ENCODE measurements at regions of chr1 and their contacts with region 1.

Region 1: GRCh38 chr1:28259307-28260167 is at the start of gene SESN2:
- DNase-seq: peak; percentile 92
- H3K4me3 ChIP-seq: peak within 1 kb of the TSS; percentile 97
- CTCF ChIP-seq: no peak

Region 2: DNA sequence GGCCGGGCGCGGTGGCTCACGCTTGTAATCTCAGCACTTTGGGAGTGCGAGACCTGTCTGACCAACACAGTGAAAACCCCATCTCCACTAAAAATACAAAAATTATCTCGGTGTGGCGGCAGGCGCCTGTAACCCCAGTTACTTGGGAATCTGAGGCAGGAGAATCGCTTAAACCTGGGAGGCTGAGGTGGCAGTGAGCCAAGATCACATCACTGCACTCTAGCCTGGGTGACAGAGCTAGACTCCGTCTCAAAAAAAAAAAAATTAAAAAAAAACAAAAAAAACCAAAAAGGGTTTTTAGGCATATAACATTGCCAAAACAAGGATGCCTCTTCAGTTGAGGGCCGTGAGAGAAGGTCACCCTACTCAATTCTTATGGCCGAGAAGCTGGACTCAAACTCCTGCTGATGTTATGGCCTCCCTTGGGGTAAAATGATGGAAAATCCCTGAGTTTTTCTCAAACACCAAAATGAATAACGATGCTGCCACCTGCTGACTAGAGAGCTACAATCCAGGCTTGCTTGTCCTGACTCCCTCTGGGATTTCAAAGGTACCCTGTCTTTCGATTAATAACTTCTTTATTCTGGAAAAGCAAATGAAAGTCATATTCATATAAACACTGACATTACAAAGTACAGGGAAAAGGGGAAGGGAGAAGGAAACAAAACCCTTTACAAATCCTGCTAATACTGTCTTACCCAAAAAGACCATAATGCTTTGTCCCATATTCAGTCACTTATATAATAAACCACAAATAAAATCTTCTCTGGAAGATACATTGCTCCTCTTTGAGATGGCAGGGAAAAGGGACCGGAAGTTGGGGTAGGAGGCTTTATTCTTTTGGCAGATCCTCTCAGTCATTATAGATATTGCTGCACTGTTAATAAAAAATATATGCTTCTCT is 343.3 kb after region 1 on chr1:
- in situ Hi-C with region 1: loop called (anchors 25 kb)
- DNase-seq: peak; percentile 79
- H3K4me3 ChIP-seq: no peak overlapping the region
- CTCF ChIP-seq: peak; percentile 71

Measured in astrocyte of the cerebellum (primary cell).